AG04449 (cell line): ENCODE measurements at regions of chr7 and their contacts with region 1.

Region 1: GRCh38 chr7:8178353-8178752 is 83.6 kb downstream of the ICA1 start:
- DNase-seq: no peak
- H3K4me3 ChIP-seq: no peak overlapping the region
- CTCF ChIP-seq: no peak

Region 2: DNA sequence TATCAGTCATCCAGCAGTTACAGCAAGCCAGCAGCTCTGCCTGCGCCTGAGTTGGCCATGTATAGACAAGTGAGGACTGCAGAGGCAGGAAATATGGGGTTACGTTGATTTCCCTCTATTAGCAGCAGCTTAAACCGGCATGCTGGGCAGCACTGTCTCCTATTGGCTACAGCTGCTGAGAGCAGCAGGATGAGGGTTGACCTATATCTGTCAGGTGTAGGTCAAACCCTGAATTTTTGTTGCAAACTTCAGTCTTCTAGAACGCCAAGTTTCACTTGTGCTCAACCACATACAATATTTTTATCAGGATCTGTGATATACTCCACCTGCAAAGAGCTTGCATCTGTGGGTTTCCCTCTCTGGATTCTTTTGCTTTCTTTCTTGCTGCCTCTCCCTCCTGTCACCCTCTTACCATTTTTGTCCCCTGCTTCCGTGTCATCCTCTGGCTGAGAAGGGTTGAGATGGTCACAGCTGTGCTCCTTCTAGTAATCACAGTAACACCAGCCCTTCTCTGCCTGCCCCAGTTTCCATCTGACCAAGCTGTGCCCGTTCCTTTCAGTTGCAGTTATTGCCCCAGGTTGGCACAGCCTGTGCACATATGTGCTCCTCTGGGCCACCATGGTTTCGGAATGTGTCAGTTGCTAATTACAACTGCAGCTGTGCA is 233.6 kb before region 1 on chr7:
- CTCF ChIA-PET with region 1: no interaction called
- POLR2A ChIA-PET with region 1: no interaction called
- DNase-seq: no peak
- H3K4me3 ChIP-seq: no peak overlapping the region
- CTCF ChIP-seq: no peak

Region 3: DNA sequence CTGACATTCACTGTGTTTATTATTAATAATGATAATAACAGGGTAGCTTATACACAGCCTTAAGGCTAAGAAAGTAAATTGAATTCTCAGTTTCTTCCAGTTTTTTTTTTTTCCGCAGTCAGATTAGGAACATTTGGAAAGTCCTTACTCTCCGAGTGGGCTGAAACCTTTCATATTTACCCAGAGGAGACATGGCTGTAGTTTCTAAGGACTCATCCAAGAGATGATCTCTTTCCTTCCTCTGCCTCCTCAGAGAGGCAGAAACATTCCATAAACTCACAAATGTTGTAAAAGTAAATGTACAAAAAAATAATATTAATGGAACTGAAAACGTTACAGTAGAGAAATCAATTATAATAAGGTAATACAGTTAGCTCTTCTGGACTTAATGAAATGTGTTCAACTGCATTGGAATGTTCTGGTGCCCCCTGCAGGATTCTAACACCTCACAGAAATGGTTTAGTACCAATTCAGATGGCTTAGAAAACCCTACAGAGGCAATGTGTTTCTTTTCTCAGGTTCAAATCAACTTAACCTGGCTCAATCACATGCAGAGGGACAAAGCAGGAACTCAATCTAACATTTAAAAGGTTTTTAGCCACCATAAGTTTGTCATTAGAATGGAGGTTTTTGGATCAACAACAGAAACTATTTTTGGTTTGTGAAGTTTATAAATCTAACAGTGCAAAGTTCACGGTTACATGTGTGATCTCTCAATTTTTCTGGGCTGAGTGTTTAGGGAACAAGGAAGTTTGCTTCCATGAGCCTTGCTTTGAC is 12.0 kb after region 1 on chr7:
- CTCF ChIA-PET with region 1: interaction called, 13 read pairs
- POLR2A ChIA-PET with region 1: no interaction called
- DNase-seq: no peak
- H3K4me3 ChIP-seq: no peak overlapping the region
- CTCF ChIP-seq: peak; percentile 53